ENCODE measurements at regions of chr17 and their contacts with region 1.

Region 1: GRCh38 chr17:38415250-38416194 is 12.7 kb upstream of the ARHGAP23 start:
- DNase-seq: no peak
- ATAC-seq: no peak
- H3K4me3 Mint-ChIP-seq: no peak overlapping the region
- H3K27ac Mint-ChIP-seq: no peak overlapping the region
- H3K4me1 Mint-ChIP-seq: peaks cover 2 to 9% (median 5%) of the 10 kb centered on the region in 4 donors
- H3K27me3 Mint-ChIP-seq: peaks cover 7 to 51% (median 25%) of the 10 kb centered on the region in 5 donors

Region 2: DNA sequence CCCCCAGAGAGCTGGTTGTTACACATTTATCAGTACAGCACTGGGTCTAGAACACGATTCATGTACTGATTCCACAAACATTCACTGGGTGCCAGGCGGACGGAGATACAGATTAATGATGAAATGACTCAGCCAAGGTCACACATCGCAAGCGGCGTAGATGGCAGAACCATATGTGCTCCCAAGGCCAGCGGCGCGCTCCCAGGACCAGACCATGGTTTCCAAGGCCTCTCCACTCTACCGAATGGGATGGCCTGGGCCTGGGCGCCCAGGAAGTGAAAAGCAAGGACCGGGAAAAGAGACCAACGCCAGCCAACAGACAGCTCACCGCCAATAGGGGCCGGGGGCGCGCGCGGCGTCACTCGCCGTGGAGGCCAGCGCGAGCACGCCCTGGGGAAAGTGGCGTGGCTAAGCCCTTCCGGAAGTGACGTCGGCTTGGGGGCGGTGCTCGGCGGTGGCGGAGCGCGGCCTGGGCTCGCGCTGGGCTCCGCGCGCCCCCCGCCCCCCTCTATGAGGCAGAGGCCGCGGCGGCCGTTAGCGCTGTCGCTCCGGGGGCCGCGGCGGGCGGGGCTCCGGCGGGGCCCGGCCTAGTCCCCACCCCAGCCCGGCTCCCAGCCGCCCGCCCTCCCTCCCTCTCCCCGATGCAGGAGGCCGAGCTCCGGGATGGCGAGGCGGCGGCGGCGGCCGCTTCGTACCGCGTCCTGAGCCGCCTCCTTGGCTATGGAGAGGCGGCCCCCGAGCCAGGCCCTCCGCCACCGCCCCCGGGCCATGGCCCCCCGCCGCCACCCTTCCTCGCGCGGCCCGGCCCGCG is 63.9 kb before region 1 on chr17 and contains the start of gene SOCS7:
- POLR2A ChIA-PET with region 1: interaction called, 26 read pairs
- DNase-seq: peak; percentile 85 to 95 (median 90)
- ATAC-seq: peak; percentile 83 to 89
- H3K4me3 Mint-ChIP-seq: peak within 1 kb of the TSS; percentile 89 to 98 (median 93)
- H3K27ac Mint-ChIP-seq: peak within 1 kb of the TSS; percentile 84 to 98 (median 94)
- H3K4me1 Mint-ChIP-seq: peaks cover 23 to 49% (median 43%) of the 10 kb centered on the region in 4 donors
- H3K27me3 Mint-ChIP-seq: no peaks in the 10 kb centered on the region
- polyA plus RNA-seq, gene SOCS7: 0.66 to 1.2 (median 0.83) TPM

Region 3: DNA sequence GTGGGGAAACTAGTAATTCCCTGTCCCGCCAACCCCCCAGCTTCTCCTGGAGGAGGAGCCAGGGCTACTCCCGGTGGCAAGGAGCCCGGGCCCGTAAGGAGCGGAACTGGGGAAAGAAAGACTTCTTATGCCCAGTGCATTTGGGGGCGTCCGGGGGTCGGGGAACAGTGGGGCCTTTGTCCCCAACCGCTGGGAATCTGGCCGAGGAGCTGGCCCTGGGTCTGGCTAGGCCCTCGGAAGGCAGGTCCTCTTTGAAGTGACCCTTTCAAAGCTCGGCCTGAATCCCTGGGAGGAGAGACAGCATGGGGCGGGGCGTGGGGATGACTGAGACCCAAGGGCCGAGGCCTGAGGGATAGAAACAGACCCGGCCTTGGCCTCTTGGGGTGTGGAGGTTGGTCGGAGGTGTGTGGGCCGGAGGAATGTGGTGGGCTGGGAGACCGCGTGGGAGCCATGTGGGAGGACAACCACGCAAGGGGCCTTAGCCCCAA is 18.7 kb after region 1 on chr17:
- POLR2A ChIA-PET with region 1: no interaction called
- DNase-seq: no peak
- ATAC-seq: no peak
- H3K4me3 Mint-ChIP-seq: no peak overlapping the region
- H3K27ac Mint-ChIP-seq: peak overlapping the region in 1 of 10 donors; percentile 23
- H3K4me1 Mint-ChIP-seq: peaks cover 0 to 4% (median 2%) of the 10 kb centered on the region in 4 donors
- H3K27me3 Mint-ChIP-seq: peaks cover 0 to 1% (median 0%) of the 10 kb centered on the region in 5 donors

Measured in naive thymus-derived CD8-positive, alpha-beta T cell (primary cell).